Panc1 (cell line): ENCODE measurements at regions of chr11 and their contacts with region 1.

Region 1: GRCh38 chr11:31233424-31233823 is 136.1 kb downstream of the DCDC1 start:
- DNase-seq: no peak
- ATAC-seq: peak; percentile 72; the same call in 1 of the 2 replicates
- H3K4me3 ChIP-seq: no peak overlapping the region
- H3K27ac ChIP-seq: no peak overlapping the region
- H3K4me1 ChIP-seq: no peaks in the 10 kb centered on the region
- H3K27me3 ChIP-seq: no peaks in the 10 kb centered on the region
- CTCF ChIP-seq: peak; percentile 36; the same call in 1 of the 2 replicates

Region 2: GRCh38 chr11:30960387-30960992 is 272.9 kb before region 1 on chr11:
- CTCF ChIA-PET with region 1: no interaction called
- POLR2A ChIA-PET with region 1: no interaction called
- in situ Hi-C with region 1: no loop called
- intact Hi-C with region 1: loop called (anchors 1 kb)
- DNase-seq: peak; percentile 10
- ATAC-seq: 0 out of 2 replicates have a peak, but pooled peaks have one; percentile 63
- H3K4me3 ChIP-seq: no peak overlapping the region
- H3K27ac ChIP-seq: no peak overlapping the region
- H3K4me1 ChIP-seq: no peaks in the 10 kb centered on the region
- H3K27me3 ChIP-seq: no peaks in the 10 kb centered on the region
- CTCF ChIP-seq: peak; percentile 68; the same call in 1 of the 2 replicates

Region 3: DNA sequence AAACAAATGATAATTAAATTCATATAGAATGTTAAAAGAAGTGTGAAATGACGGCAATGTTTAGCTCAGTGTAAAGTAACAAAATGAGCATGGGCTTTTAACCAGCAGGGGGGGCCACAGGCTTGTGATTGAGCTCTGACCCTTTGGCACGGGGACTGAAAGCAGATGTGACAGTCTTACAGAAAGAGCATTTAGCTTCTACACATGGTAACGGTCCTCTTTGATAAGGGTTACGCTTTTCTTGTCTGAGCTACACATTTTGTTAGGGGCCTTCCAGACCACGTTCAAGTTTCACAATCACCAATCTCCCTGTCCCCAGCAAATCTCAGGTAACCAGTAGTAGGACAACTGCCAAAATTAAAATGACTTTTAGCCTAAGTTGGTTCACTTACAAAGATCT is 126.4 kb before region 1 on chr11:
- CTCF ChIA-PET with region 1: interaction called, 9 read pairs
- POLR2A ChIA-PET with region 1: no interaction called
- in situ Hi-C with region 1: no loop called
- intact Hi-C with region 1: loop called (anchors 1 kb)
- DNase-seq: peak; percentile 33
- ATAC-seq: peak; percentile 91
- H3K4me3 ChIP-seq: no peak overlapping the region
- H3K27ac ChIP-seq: no peak overlapping the region
- H3K4me1 ChIP-seq: no peaks in the 10 kb centered on the region
- H3K27me3 ChIP-seq: no peaks in the 10 kb centered on the region; the same call in 1 of the 2 replicates
- CTCF ChIP-seq: peak; percentile 79